Activated T-helper 1 cell treated with anti-CD3 and anti-CD28 coated beads, Interleukin-12 subunit alpha, Interleukin-12 subunit beta, Interleukin-2, Interleukin-4 antibody, amounts not matched to agents 30 ng/mL and 10 ng/mL and 1 ng/mL, durations not matched to agents 14 hours and 24 hours and 36 hours (primary cell): ENCODE measurements at regions of chr6 and their contacts with region 1.

Region 1: GRCh38 chr6:87393022-87393622 is 14.7 kb upstream of the CFAP206 start:
- DNase-seq: peak; percentile 14
- H3K4me3 Mint-ChIP-seq: no peak overlapping the region
- H3K27ac Mint-ChIP-seq: no peak overlapping the region
- H3K4me1 Mint-ChIP-seq: no peaks in the 10 kb centered on the region
- H3K27me3 Mint-ChIP-seq: no peaks in the 10 kb centered on the region

Region 2: DNA sequence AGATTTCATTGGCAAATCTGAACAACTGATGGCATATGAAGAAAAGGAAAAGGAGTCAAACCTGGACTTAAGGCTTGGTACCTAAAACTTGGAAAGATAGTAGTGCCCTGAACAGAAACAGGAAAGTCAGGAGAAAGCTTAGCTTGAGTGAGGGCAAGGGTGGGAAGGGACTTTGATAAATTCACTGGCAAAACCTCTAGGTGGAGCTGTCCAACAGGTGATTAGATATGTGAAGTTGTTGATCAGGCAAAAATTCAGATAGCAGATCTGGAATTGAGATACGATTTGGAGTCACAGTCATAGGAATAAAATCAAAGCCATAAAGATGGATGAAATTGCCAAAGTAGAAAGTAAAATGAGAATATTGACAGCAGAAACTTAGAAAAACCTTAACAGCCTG is 253.9 kb before region 1 on chr6:
- intact Hi-C with region 1: loop called (anchors 1 kb)
- DNase-seq: peak; percentile 14
- H3K4me3 Mint-ChIP-seq: no peak overlapping the region
- H3K27ac Mint-ChIP-seq: no peak overlapping the region
- H3K4me1 Mint-ChIP-seq: peaks cover 6% of the 10 kb centered on the region
- H3K27me3 Mint-ChIP-seq: peaks cover 49% of the 10 kb centered on the region

Region 3: DNA sequence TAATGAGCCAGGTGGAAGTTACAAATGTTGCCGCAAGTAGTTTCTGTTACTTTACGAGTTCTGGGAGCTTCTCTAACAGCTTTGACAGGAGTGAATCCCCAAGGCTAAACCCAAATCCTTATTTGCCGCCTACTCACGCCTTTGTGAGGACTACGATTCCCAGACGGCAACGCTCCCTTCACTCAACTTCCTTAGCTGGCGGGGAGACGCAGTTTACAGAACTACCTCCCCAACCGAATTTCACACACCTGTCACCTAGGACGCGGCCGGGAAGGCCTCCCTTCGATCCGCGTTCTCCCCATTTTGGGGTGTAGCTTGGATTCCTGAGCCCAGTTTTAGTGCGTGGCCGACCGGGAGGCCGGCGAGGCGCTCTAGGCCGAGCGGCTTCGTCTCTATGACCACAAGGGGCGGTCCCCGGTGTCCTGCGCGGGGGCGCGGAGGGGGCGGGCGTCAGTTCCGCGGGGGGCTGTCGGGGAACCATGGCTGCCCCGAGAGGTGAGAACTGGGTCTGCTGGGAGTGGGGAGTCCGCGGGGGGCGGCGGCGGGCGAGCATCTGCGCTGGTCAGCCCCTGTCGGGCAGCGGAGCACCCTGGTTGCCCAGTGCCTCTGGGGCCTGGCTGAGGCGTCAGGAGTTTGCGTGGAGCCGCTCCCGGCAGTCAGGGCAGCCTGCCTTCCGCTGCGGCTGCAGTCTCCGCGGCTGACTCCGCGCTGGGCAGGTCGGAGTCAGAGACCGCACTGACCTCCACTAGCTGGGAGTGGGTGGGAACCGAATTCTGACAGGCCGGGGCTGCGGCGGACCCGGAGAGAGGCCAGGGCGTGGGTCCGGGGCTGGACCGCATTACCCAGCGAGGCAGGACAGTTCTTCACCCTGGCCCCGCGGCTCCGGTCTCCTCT is 79.7 kb after region 1 on chr6 and contains the start of gene SLC35A1:
- intact Hi-C with region 1: loop called (anchors 1 kb)
- DNase-seq: peak; percentile 77
- H3K4me3 Mint-ChIP-seq: peak within 1 kb of the TSS; percentile 98
- H3K27ac Mint-ChIP-seq: peak within 1 kb of the TSS; percentile 97
- H3K4me1 Mint-ChIP-seq: peaks cover 14% of the 10 kb centered on the region
- H3K27me3 Mint-ChIP-seq: peaks cover 7% of the 10 kb centered on the region
- total RNA-seq, gene SLC35A1: 9.7 and 10.2 TPM in 2 replicates

Region 4: GRCh38 chr6:87799651-87800050 is 406.5 kb after region 1 on chr6:
- intact Hi-C with region 1: loop called (anchors 5 kb)
- DNase-seq: no peak
- H3K4me3 Mint-ChIP-seq: no peak overlapping the region
- H3K27ac Mint-ChIP-seq: no peak overlapping the region
- H3K4me1 Mint-ChIP-seq: peaks cover 5% of the 10 kb centered on the region
- H3K27me3 Mint-ChIP-seq: peaks cover 10% of the 10 kb centered on the region

Region 5: DNA sequence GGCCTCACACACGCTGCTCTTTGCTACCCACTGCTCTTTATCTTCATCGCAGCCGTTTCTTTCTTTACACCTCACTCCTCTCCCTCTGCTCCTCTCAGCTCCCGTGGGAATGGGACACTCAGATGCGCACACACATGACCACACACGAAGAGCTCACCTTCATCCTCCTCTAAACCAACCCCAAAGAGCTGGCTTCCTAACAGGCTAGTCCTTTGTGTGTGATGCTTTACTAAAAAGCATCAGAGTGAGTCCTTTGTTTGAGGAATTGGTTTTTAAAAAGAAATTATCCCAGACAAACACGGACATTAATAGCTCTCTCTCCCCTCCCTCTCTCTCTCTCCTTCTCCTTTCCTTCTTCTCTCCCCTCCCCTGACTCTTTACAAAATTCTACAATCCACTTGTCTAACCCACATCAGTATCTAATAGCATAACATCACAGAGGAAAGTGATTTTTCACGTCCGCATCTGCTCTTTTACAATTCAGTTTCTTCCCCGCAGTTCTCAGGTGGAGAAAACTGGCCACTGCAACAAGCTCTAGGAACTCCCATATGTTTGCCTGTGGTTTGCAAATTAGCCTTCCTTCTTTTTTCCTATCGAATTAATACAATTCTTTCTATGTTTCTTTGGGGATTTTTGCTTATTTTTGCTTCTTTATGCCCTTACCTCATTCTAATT is 1079.9 kb after region 1 on chr6:
- intact Hi-C with region 1: loop called (anchors 5 kb)
- DNase-seq: no peak
- H3K4me3 Mint-ChIP-seq: no peak overlapping the region
- H3K27ac Mint-ChIP-seq: no peak overlapping the region
- H3K4me1 Mint-ChIP-seq: no peaks in the 10 kb centered on the region
- H3K27me3 Mint-ChIP-seq: no peaks in the 10 kb centered on the region

Region 6: GRCh38 chr6:88870717-88871330 is 1477.7 kb after region 1 on chr6:
- intact Hi-C with region 1: loop called (anchors 2 kb)
- DNase-seq: peak; percentile 17
- H3K4me3 Mint-ChIP-seq: no peak overlapping the region
- H3K27ac Mint-ChIP-seq: no peak overlapping the region
- H3K4me1 Mint-ChIP-seq: peaks cover 44% of the 10 kb centered on the region
- H3K27me3 Mint-ChIP-seq: no peaks in the 10 kb centered on the region